ENCODE measurements at regions of chr5 and their contacts with region 1.

Region 1: GRCh38 chr5:36875790-36876388 is 680 bp upstream of the NIPBL start:
- DNase-seq: peak; percentile 75 to 87
- ATAC-seq: peak; percentile 65 to 83 (median 71)
- H3K4me3 ChIP-seq: peak overlapping the region; percentile 68
- H3K4me3 Mint-ChIP-seq: peak overlapping the region; percentile 98
- H3K27ac ChIP-seq: peak overlapping the region; percentile 88
- H3K27ac Mint-ChIP-seq: peak overlapping the region; percentile 92 to 98
- H3K4me1 ChIP-seq: peaks cover 14% of the 10 kb centered on the region
- H3K4me1 Mint-ChIP-seq: peaks cover 40 to 44% of the 10 kb centered on the region in 2 donors
- H3K27me3 ChIP-seq: no peaks in the 10 kb centered on the region
- H3K27me3 Mint-ChIP-seq: no peaks in the 10 kb centered on the region
- CTCF ChIP-seq: peak; percentile 49

Region 2: DNA sequence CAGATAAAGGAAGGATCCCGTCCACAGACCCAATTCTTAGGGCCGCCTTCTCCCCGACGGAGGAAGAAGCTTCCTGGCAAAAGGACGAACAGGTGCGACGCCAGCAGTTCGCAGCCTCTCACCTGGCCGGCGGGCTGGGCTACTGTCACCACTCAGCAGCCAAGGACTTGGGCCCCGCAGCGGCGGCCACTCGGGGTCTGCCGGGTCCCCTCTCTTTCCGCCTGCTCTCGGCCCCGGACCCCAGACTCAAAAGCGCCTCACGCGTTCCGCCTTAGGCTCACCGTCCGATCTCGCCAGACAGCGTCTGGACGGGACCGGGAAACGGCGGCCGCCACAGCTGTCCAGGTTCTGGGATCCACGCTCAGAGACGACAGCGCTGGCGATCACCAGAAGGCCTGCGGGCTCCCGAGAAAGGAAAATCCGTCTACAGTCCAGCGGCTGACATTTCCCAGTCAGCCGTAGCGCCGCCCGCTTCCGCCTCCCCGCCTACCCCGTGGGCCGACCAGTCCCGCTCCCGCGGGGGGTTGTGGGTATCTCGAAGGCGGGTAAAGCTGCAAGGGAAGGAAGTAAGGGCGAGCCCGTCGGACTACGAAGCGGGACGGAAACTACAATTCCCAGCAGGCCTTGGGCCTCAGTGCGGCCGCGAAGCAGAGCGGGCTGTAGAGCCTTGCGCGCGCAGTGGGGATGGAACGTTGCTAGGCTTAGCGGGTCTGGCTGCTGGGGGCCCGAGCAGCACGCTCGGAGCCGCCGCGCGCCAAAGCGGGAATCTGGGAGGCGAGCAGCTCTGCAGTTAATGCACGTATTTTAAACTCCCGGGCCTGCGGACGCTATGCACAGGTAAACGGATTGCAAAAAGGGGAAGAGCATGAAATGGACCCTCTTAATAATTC is 724.2 kb before region 1 on chr5 and contains the starts of genes LMBRD2 and SKP2:
- intact Hi-C with region 1: loop called (anchors 2 kb)
- DNase-seq: peak; percentile 96 to 98
- ATAC-seq: peak; percentile 97 to 100 (median 98)
- H3K4me3 ChIP-seq: peak within 1 kb of the TSS; percentile 87
- H3K4me3 Mint-ChIP-seq: peak within 1 kb of the TSS; percentile 98
- H3K27ac ChIP-seq: peak within 1 kb of the TSS; percentile 70
- H3K27ac Mint-ChIP-seq: peak within 1 kb of the TSS; percentile 90 to 92
- H3K4me1 ChIP-seq: peaks cover 14% of the 10 kb centered on the region
- H3K4me1 Mint-ChIP-seq: peaks cover 52 to 63% of the 10 kb centered on the region in 2 donors
- H3K27me3 ChIP-seq: no peaks in the 10 kb centered on the region
- H3K27me3 Mint-ChIP-seq: no peaks in the 10 kb centered on the region
- CTCF ChIP-seq: no peak
- total RNA-seq, gene LMBRD2: 6.9 to 9.8 (median 9.6) TPM
- total RNA-seq, gene SKP2: 12.0 to 20.5 (median 15.0) TPM

Region 3: GRCh38 chr5:36241631-36242533 is 634.0 kb before region 1 on chr5 and contains the start of gene NADK2:
- intact Hi-C with region 1: loop called (anchors 2 kb)
- DNase-seq: peak; percentile 93 to 96
- ATAC-seq: peak; percentile 86 to 93 (median 86)
- H3K4me3 ChIP-seq: peak within 1 kb of the TSS; percentile 91
- H3K4me3 Mint-ChIP-seq: peak within 1 kb of the TSS; percentile 93
- H3K27ac ChIP-seq: peak within 1 kb of the TSS; percentile 95
- H3K27ac Mint-ChIP-seq: peak within 1 kb of the TSS; percentile 54 to 92
- H3K4me1 ChIP-seq: peaks cover 15% of the 10 kb centered on the region
- H3K4me1 Mint-ChIP-seq: peaks cover 25 to 42% of the 10 kb centered on the region in 2 donors
- H3K27me3 ChIP-seq: no peaks in the 10 kb centered on the region
- H3K27me3 Mint-ChIP-seq: no peaks in the 10 kb centered on the region
- CTCF ChIP-seq: peak; percentile 66
- total RNA-seq, gene NADK2: 13.1 to 16.2 (median 14.3) TPM

Region 4: DNA sequence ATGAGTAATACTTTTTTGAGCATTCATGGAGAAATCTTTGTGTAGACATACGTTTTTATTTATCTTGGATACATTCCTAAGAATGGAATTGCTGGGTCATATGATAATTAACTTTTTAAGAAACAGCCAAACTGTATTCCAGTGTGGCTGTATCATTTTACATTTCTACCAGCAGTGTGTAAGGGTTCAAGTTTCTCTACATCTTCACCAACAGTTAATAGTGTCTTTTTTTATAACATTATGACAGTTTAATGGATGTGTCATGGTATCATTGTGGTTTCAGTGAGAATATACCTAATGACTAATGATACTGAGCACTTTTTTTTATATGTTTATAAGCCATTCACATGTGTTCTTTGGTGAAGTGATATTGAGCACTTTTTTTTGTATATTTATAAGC is 53.1 kb after region 1 on chr5:
- intact Hi-C with region 1: loop called (anchors 5 kb)
- DNase-seq: no peak
- ATAC-seq: peak in 2 of 3 donors; percentile 68 to 83
- H3K4me3 ChIP-seq: no peak overlapping the region
- H3K4me3 Mint-ChIP-seq: no peak overlapping the region
- H3K27ac ChIP-seq: no peak overlapping the region
- H3K27ac Mint-ChIP-seq: peak overlapping the region; percentile 13 to 47
- H3K4me1 ChIP-seq: peaks cover 4% of the 10 kb centered on the region
- H3K4me1 Mint-ChIP-seq: peaks cover 78 to 83% of the 10 kb centered on the region in 2 donors
- H3K27me3 ChIP-seq: no peaks in the 10 kb centered on the region
- H3K27me3 Mint-ChIP-seq: no peaks in the 10 kb centered on the region
- CTCF ChIP-seq: no peak

Region 5: DNA sequence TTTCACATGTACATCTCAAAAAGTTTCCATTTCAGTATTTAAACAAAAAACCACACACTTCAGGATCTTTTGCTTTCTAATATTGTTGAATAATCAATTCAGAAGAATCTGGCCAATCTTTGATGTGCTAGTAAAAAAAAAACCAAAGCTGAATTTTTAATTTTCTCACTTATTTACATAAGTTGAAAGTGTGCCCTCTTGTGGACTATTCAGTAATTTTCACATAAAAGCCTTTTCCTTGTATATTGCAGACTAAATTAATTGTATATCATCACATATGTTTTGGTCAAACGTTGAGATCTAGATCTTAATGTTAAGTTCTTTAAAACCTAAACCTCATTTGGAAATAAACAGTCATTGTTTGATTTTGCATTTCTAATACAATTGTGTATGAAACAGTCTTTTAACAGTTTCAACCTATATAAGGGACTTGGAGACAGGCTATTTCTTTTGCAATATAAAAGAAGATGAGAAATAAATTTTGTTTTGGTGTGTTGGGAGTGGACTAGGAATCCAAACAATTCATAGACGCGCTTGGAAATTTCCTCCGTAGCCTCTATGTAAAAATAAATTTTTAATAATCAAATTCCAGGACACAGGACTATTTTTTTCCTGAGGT is 68.8 kb after region 1 on chr5:
- intact Hi-C with region 1: loop called (anchors 5 kb)
- DNase-seq: peak in 1 of 2 donors; percentile 77
- ATAC-seq: peak; percentile 37 to 58 (median 43)
- H3K4me3 ChIP-seq: no peak overlapping the region
- H3K4me3 Mint-ChIP-seq: no peak overlapping the region
- H3K27ac ChIP-seq: no peak overlapping the region
- H3K27ac Mint-ChIP-seq: no peak overlapping the region
- H3K4me1 ChIP-seq: no peaks in the 10 kb centered on the region
- H3K4me1 Mint-ChIP-seq: peaks cover 35 to 49% of the 10 kb centered on the region in 2 donors
- H3K27me3 ChIP-seq: no peaks in the 10 kb centered on the region
- H3K27me3 Mint-ChIP-seq: no peaks in the 10 kb centered on the region
- CTCF ChIP-seq: peak; percentile 79

Region 6: DNA sequence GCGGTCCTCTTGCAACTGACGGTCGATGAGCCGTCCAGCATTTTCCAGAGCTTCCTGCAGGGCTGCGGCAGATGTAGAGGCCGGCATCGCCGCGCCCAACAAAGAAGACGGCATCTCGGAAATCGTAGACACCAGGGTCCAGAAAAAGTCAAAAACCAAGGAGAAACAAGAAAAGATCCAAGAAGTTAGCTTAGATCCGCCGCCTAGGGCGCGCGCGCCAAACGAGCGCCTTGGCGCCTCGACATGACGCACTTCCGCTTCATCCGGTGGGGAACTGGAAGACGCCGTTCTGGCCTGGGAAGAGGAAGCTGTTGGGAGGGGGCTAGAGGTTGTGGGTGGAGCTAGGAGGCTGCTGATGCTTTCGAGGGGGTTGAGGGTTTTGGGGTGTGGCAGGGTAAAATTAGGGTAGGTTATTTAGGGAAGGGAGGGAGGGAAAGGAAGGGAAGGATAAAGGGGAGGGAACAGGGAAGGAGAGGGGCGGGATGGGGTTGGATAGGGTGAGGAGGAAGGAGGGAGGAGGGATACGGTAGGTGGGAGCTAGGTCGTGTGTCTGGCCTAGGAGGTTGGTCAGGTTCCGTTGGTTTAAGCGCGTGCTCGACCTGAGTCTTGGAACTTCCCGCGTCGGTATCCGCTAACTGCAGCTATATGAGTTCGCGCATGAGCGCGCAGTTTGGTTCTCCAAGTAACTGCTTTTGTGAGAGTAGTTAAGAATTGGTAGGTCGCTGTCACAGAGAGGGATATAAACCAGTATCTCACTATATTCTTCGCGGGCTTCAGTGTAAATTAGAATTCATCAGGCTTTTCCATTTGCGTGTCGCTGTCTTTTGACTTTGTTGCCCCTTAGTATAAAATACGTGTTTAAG is 495.2 kb after region 1 on chr5 and contains the start of gene NUP155:
- intact Hi-C with region 1: loop called (anchors 5 kb)
- DNase-seq: peak; percentile 80 to 96
- ATAC-seq: peak; percentile 89 to 96 (median 91)
- H3K4me3 ChIP-seq: peak within 1 kb of the TSS; percentile 77
- H3K4me3 Mint-ChIP-seq: peak within 1 kb of the TSS; percentile 97
- H3K27ac ChIP-seq: peak within 1 kb of the TSS; percentile 87
- H3K27ac Mint-ChIP-seq: peak within 1 kb of the TSS; percentile 95 to 97
- H3K4me1 ChIP-seq: peaks cover 19% of the 10 kb centered on the region
- H3K4me1 Mint-ChIP-seq: peaks cover 35 to 37% of the 10 kb centered on the region in 2 donors
- H3K27me3 ChIP-seq: no peaks in the 10 kb centered on the region
- H3K27me3 Mint-ChIP-seq: no peaks in the 10 kb centered on the region
- CTCF ChIP-seq: no peak
- total RNA-seq, gene NUP155: 21.1 to 29.0 (median 27.9) TPM

Measured in natural killer cell (primary cell).